ENCODE measurements at regions of chr9 and their contacts with region 1.

Region 1: DNA sequence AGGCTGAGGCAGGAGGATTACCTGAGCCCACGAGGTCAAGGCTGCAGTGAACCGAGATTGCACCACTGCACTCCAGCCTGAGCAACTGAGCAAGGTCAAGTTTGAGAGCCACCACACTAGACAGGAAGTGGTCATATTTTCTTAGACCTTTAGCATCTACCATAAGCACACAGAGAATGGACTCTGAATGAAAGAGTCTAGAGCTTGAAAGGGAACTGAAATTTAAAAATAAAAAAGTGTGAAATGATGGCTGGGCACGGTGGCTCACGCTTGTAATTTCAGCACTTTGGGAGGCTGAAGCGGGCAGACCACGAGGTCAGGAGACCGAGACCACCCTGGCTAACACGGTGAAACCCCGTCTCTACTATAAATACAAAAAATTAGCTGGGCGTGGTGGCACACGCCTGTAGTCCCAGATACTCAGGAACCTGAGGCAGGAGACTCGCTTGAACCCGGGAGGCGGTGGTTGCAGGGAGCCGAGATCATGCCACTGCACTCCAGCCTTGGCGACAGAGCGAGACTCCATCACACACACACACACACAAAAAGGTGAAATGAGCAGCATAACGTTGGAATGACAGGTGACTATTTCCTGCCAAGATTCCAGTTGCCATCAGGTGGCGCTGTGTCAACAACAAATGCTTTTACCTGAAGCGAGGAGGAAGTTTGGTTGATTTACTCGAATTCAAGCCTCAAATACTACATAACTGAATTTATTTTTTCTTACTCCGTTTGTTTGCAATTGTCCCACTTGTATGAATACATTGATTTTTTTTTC is 21.3 kb upstream of the AK3 start:
- DNase-seq: peak; percentile 72
- ATAC-seq: peak; percentile 73
- H3K4me3 ChIP-seq: peak overlapping the region; percentile 21 to 62 (median 55)
- H3K27ac ChIP-seq: no peak overlapping the region
- H3K4me1 ChIP-seq: peaks cover 23% of the 10 kb centered on the region
- H3K27me3 ChIP-seq: no peaks in the 10 kb centered on the region; a peak in 1 of 5 replicates
- CTCF ChIP-seq: peak; percentile 94
- EP300 ChIP-seq: no peak
- POLR2A ChIP-seq: no peak
- RAD21 ChIP-seq: peak; percentile 81

Region 2: GRCh38 chr9:4604678-4605095 is 157.6 kb before region 1 on chr9:
- CTCF ChIA-PET with region 1: no interaction called
- POLR2A ChIA-PET with region 1: no interaction called
- in situ Hi-C with region 1: no loop called
- intact Hi-C with region 1: loop called (anchors 5 kb)
- DNase-seq: peak; percentile 75
- ATAC-seq: peak; percentile 97
- H3K4me3 ChIP-seq: no peak overlapping the region
- H3K27ac ChIP-seq: no peak overlapping the region
- H3K4me1 ChIP-seq: no peaks in the 10 kb centered on the region
- H3K27me3 ChIP-seq: no peaks in the 10 kb centered on the region
- CTCF ChIP-seq: peak; percentile 72
- EP300 ChIP-seq: no peak
- POLR2A ChIP-seq: no peak
- RAD21 ChIP-seq: 0 out of 2 replicates have a peak, but pooled peaks have one; percentile 23

Region 3: DNA sequence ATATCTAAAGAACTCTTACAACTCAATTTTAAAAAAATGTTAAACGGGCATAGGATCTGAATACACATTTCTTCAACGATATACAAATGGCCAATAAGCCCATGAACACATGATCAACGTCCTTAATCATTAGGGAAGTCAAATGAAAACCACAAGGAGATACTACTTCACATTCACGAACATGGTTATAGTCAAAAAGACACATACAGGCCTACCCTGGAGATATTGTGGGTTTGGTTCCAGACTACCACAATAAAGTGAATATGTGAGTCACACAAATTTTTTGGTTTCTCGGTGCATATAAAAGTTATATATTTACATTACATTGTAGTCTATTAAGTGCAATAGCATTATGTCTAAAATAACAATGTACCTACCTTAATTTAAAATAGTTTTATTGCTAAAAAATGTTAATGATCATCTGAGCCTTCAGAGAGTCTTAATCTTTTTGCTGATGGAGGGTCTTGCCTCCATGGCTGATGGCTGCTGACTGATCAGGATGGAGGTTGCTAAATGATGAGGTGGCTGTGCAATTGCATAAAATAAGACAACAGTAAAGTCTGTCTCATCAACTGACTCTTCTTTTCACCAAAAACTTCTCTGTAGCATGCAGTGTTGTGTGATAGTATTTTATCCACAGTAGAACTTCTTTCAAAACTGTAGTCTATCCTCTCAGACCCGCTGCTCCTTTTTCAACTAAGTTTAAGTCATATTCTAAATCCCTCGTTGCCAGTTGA is 36.4 kb before region 1 on chr9:
- CTCF ChIA-PET with region 1: no interaction called
- POLR2A ChIA-PET with region 1: no interaction called
- in situ Hi-C with region 1: no loop called
- intact Hi-C with region 1: no loop called
- DNase-seq: no peak
- ATAC-seq: no peak
- H3K4me3 ChIP-seq: no peak overlapping the region
- H3K27ac ChIP-seq: no peak overlapping the region
- H3K4me1 ChIP-seq: peaks cover 11% of the 10 kb centered on the region; the same call in 1 of the 2 replicates
- H3K27me3 ChIP-seq: no peaks in the 10 kb centered on the region
- CTCF ChIP-seq: no peak
- EP300 ChIP-seq: no peak
- POLR2A ChIP-seq: no peak
- RAD21 ChIP-seq: no peak

Region 4: DNA sequence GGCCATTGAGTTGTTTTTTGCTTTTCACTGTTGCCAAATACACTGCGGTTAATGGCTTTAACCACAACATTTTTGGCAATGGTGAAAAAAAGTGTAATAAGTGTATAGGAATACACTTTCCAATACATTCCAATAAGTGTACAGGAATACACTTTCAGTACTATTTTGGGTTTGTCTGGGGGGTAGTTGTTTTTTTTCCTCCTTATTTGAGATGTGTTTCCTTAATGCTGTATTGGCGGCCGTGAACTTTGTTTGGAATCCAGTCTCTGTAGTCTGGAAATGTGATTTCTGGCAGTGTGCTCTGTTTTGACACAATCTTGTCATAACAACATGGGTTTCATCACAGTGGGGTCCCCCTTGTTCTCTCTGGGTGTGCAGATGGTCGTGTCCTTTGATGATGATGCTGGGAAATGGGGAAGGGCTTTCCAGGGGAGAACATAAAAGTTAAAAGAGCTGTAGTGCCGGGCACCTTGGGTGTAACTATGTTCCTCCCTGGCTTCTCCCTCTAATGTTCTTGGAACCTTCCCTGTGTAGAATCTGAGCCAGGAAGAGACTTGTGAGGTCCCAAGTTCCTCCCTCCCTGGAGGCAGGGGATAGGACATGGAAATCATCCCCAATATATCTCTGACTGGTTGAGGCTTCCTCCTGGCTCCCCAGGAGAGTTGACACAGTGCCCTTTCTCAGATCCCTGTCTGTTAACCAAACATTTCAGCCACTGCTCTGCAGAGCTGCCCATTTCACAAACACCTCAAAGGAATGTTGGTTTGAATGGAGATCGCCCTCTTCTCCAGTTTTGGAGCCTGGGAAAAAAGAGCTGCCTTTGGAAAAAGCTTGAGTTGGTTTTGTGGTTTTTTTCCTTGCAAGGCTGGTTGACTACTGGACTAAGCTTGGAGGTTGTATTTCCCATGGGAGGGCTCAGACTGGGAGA is 75.2 kb after region 1 on chr9:
- CTCF ChIA-PET with region 1: no interaction called
- POLR2A ChIA-PET with region 1: no interaction called
- in situ Hi-C with region 1: no loop called
- intact Hi-C with region 1: loop called (anchors 2 kb)
- DNase-seq: peak; percentile 81
- ATAC-seq: peak; percentile 54
- H3K4me3 ChIP-seq: peak overlapping the region in 1 of 3 experiments; percentile 31; a peak in 2 of 6 replicates
- H3K27ac ChIP-seq: peak overlapping the region; percentile 75
- H3K4me1 ChIP-seq: peaks cover 100% of the 10 kb centered on the region
- H3K27me3 ChIP-seq: no peaks in the 10 kb centered on the region
- CTCF ChIP-seq: no peak
- EP300 ChIP-seq: 0 out of 4 replicates have a peak, but pooled peaks of 1 of the 2 experiments have one; percentile 33
- POLR2A ChIP-seq: 0 out of 4 replicates have a peak, but pooled peaks of 1 of the 2 experiments have one; percentile 23
- RAD21 ChIP-seq: no peak

Region 5: GRCh38 chr9:5263351-5264218 is 501.3 kb after region 1 on chr9:
- CTCF ChIA-PET with region 1: no interaction called
- POLR2A ChIA-PET with region 1: no interaction called
- in situ Hi-C with region 1: no loop called
- intact Hi-C with region 1: loop called (anchors 5 kb)
- DNase-seq: peak; percentile 15
- ATAC-seq: peak; percentile 78
- H3K4me3 ChIP-seq: no peak overlapping the region
- H3K27ac ChIP-seq: no peak overlapping the region
- H3K4me1 ChIP-seq: peaks cover 8% of the 10 kb centered on the region
- H3K27me3 ChIP-seq: no peaks in the 10 kb centered on the region
- CTCF ChIP-seq: peak; percentile 23; the same call in 1 of the 2 replicates
- EP300 ChIP-seq: no peak
- POLR2A ChIP-seq: no peak
- RAD21 ChIP-seq: no peak

Region 6: DNA sequence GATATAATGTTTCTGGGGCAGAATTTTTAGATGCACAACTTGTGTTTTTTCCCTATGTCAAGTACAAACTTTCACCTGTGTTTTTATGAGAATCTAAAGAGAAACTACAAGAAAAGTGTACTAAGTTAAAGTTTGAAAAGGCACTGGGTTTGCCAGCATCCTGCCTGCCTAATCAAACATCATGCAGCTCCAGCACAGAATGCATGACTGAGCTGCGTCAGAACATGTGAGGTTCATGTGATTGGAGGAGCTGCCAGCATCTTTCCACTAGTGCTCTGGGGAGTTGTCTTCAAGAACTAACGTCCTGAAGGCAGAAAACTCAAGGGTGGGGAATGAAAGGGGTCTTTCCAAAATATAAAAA is 820.5 kb after region 1 on chr9:
- CTCF ChIA-PET with region 1: no interaction called
- POLR2A ChIA-PET with region 1: no interaction called
- in situ Hi-C with region 1: loop called (anchors 25 kb)
- intact Hi-C with region 1: no loop called
- DNase-seq: no peak
- ATAC-seq: no peak
- H3K4me3 ChIP-seq: no peak overlapping the region
- H3K27ac ChIP-seq: no peak overlapping the region
- H3K4me1 ChIP-seq: no peaks in the 10 kb centered on the region
- H3K27me3 ChIP-seq: no peaks in the 10 kb centered on the region
- CTCF ChIP-seq: no peak
- EP300 ChIP-seq: no peak
- POLR2A ChIP-seq: no peak
- RAD21 ChIP-seq: no peak

Measured in HepG2 (cell line).